Cardiac septum (tissue), 1 donor: ENCODE measurements at regions of chr3 and their contacts with region 1.

Region 1: GRCh38 chr3:186108941-186109865 is at the start of gene ETV5:
- DNase-seq: peak; percentile 100
- total RNA-seq, gene ETV5: 17.4 TPM

Region 2: GRCh38 chr3:185937689-185938463 is 171.3 kb before region 1 on chr3 and contains the start of gene TRA2B:
- intact Hi-C with region 1: loop called (anchors 2 kb)
- DNase-seq: peak; percentile 100
- total RNA-seq, gene TRA2B: 62.1 TPM

Region 3: DNA sequence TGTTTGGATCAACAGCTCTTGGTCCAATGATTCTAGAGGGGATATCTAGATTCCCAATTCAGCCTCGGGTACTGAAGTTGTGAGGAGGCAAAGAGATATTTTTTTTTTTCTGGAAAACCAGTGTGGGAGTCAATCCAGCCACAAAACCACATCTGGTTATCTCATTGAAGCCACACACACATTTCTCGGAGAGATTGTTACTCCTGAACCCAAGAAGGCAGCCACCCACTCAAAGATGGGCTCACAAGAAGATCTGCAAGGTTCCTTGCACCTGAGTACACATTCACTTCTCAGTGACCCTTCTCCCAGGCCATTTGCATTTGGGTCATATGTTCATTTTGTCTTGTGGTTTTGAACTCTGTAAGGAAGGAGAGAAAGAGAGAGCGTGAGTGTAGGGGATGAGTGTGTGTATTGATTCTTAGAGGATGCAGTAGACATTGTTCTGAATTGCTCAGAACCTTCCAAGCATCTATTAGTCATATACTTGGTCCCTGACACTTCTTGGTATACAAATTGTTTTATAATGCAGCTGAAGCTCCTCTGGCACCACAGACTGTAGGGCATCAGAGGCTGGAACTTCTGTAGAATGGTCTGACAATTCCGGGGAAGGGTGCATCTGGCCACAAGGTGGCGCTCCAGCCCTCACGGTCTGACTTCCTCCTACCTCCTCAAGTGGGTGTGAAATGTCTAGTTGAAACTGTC is 132.1 kb before region 1 on chr3:
- intact Hi-C with region 1: no loop called
- DNase-seq: peak; percentile 87

Region 4: GRCh38 chr3:186241910-186242821 is 133.0 kb after region 1 on chr3:
- intact Hi-C with region 1: loop called (anchors 10 kb)
- DNase-seq: peak; percentile 84

Region 5: GRCh38 chr3:186570096-186570940 is 461.1 kb after region 1 on chr3 and contains the start of gene DNAJB11:
- intact Hi-C with region 1: loop called (anchors 10 kb)
- DNase-seq: peak; percentile 100
- total RNA-seq, gene DNAJB11: 34.3 TPM